ENCODE measurements at regions of chr3 and their contacts with region 1.

Region 1: DNA sequence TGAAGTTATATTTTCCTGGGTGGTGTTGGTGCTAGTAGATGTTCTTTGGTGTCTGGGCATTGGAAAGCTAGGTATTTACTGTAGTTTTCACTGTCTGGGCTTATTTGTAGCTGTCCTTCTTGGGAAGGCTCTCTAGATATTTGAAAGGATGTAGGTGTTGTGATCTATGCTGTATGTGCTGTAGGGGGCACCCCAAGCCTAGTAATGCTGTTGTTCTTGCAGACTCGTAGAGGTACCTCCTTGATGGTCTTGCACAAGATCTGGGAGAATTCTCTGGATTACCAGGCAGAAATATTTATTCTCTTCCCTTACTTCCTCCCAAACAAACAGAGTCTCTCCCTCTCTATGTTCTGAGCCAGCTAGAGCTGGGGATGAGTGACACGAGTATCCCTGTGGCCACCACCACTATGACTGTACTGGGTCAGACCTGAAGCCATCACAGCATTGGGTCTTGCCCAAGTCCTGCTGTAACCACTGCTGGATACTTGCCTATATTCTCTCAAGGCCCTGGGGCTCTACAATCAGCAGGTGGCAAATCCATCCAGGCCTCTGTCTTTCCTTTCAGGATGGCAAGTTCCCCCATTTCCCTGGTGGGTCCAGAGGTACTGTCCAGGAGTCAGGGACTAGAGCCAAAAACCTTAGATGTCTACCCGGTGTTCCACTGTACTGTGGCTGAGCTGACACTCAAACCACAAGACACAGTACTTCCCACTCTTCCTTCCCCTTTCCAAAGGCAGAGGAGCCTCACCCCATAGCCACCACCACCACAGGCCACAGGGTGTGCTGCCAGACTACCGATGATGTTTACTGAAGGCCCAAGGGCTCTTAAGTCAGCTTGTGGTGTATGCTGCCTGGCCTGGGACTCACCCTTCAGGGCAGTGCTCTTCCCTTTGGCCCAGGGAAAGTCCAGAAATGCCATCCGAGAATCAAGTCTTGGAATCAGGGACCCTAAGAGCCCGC is 195.2 kb upstream of the DPPA4 start:
- DNase-seq: no peak
- H3K4me3 ChIP-seq: no peak overlapping the region
- H3K27ac ChIP-seq: no peak overlapping the region
- H3K4me1 ChIP-seq: no peaks in the 10 kb centered on the region
- H3K27me3 ChIP-seq: no peaks in the 10 kb centered on the region
- CTCF ChIP-seq: peak in 3 of 4 experiments; percentile 22 to 35 (median 22)
- EP300 ChIP-seq: no peak
- POLR2A ChIP-seq: no peak

Region 2: GRCh38 chr3:108757404-108757982 is 775.0 kb before region 1 on chr3 and contains the start of gene RETNLB:
- intact Hi-C with region 1: no loop called
- DNase-seq: no peak
- H3K4me3 ChIP-seq: no peak within 1 kb of the TSS
- H3K27ac ChIP-seq: no peak within 1 kb of the TSS
- H3K4me1 ChIP-seq: no peaks in the 10 kb centered on the region
- H3K27me3 ChIP-seq: no peaks in the 10 kb centered on the region
- CTCF ChIP-seq: no peak
- EP300 ChIP-seq: no peak
- POLR2A ChIP-seq: no peak
- total RNA-seq, gene RETNLB: not detected

Region 3: GRCh38 chr3:110314512-110315114 is 782.1 kb after region 1 on chr3:
- intact Hi-C with region 1: loop called (anchors 2 kb)
- DNase-seq: no peak
- H3K4me3 ChIP-seq: no peak overlapping the region
- H3K27ac ChIP-seq: no peak overlapping the region
- H3K4me1 ChIP-seq: no peaks in the 10 kb centered on the region
- H3K27me3 ChIP-seq: no peaks in the 10 kb centered on the region
- CTCF ChIP-seq: peak; percentile 13 to 72 (median 60)
- EP300 ChIP-seq: no peak
- POLR2A ChIP-seq: no peak

Region 4: DNA sequence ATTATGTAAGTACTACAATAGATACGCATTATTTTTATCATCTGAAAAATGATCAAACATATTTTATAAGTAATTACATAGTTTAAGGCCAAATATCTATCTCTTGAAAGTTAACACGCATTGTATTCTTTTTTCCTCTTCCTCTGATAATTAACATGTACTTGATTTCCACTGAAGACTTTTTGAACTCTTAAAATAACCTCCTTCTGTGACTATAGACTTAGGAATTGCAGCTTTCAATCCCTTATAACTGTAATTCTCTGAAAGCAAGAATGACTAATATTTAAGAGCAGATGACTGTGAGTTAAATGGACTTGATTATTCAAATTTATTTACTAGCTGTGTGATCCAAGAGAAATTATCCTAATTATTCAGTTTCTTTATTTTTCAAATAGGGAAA is 808.5 kb after region 1 on chr3:
- intact Hi-C with region 1: no loop called
- DNase-seq: no peak
- H3K4me3 ChIP-seq: no peak overlapping the region
- H3K27ac ChIP-seq: no peak overlapping the region
- H3K4me1 ChIP-seq: peaks cover 0 to 11% (median 4%) of the 10 kb centered on the region in 4 donors
- H3K27me3 ChIP-seq: no peaks in the 10 kb centered on the region
- CTCF ChIP-seq: no peak
- EP300 ChIP-seq: no peak
- POLR2A ChIP-seq: no peak